Cardiac septum (tissue), 1 donor: ENCODE measurements at regions of chr16 and their contacts with region 1.

Region 1: GRCh38 chr16:20806168-20807050 is at the starts of genes ERI2 and REXO5:
- DNase-seq: peak; percentile 95
- total RNA-seq, gene ERI2: 9.8 TPM
- total RNA-seq, gene REXO5: 3.0 TPM

Region 2: DNA sequence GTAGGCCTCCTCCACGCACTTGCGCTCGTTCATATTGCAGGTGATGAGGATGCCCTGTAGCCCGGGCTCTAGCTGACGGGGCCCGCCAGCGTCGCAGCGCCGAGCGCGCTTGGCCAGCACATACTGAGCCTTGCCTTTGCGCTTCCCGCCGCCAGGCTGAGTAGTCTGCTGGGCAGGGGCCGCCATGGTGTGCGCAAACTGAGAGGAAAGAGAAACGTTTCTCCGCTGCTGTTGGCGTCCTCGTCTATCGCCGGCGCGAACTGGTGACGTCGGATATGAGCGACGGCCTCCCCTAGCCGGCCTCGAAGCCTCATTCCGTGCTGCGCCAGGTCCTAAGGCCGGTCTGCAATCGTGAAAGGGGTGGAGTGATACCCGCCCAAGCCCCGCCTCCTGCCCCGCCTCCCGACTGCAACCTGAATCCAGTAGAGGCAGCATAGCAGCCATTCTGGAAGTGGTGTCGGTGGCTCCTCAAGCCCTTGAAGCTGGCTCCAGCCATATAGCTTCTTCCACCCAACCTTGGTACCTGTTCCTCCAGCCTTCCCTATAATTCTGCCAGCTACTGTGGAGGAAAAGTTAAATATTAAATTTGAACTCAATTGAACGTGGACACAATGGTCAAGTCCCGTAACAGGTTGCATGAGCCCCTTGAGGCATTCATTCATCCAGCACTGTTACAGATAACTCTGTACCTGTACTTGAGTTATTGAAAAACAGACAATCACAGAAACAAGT is 64.7 kb before region 1 on chr16 and contains the start of gene THUMPD1:
- intact Hi-C with region 1: loop called (anchors 2 kb)
- DNase-seq: peak; percentile 98
- total RNA-seq, gene THUMPD1: 17.5 TPM

Region 3: GRCh38 chr16:20849587-20850390 is 43.4 kb after region 1 on chr16:
- intact Hi-C with region 1: loop called (anchors 5 kb)
- DNase-seq: no peak

Region 4: DNA sequence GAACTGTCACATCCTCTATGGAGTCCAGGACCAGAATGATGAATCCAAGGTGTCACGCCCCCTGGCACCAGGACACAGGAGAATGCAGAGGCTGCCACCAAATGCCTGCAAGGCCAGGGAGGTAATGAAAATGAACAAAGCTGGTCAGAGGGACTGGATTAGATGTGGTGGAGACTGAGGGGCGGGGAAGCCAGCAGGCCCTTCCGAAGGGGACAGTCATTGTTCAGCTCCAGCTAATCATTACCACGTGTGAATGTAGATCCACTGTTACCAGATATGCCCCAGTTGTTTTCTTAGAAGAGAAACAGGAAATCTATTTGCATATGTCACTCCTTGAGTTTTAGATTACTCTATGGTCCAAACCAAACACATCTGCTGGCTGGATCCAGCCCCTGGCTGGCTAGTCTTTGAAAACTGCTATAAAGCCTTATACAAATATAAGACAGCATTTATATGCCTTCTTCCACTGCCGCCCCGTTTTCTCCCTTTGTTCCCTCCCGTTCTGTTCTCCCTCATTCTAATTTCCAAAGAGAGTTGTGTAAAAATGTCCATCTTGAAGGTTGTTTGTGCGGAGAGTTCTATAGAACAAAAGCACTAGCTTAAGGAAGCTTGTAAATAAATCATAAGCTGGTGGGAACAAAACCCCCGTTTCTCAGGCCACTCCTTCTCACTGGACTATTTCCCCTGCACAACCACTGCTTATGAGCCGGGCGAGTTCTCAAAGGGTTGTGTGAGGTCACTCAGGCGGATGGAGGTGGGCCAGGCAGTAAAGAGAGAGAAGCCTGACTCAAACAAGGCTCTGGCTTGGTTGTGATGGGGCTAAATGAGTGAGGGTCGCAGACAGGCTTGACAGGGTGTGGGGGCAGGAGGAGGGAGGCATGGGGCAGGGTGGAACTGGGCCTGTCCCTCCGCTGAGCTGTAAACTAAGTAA is 457.5 kb after region 1 on chr16:
- intact Hi-C with region 1: no loop called
- DNase-seq: no peak